Endothelial cell of umbilical vein (primary cell): ENCODE measurements at regions of chr3 and their contacts with region 1.

Region 1: DNA sequence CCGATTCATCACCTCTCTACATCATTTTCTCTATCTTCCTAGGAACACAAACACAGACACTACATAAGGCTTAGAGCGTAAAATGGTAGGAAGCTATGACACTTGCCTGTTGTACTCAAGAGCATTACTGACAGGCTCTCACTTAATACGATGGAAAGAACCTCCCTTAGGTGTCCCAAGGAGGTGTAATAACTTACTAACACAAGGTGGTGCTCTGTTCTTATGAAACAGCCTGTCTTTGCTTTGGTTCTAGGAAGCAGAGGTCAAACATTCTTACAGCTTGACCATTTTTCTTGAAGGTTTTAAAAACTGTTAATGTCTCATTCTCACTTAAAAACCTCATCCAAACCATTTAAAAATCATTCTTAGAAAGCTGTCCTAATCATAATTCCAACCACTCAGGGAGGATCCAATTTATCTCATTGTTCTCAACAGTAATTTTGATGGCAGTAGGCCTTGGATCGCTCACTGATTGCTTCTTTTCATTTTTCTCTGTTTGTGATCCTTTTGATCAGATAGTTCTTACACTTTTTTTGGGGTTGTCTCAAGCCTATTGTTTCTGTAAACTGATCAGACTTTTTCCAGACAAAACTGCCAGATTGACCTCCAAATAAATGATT is 317.8 kb upstream of the AGTR1 start:
- DNase-seq: peak; percentile 58
- H3K4me3 ChIP-seq: no peak overlapping the region
- H3K27ac ChIP-seq: no peak overlapping the region
- H3K4me1 ChIP-seq: no peaks in the 10 kb centered on the region
- H3K27me3 ChIP-seq: no peaks in the 10 kb centered on the region
- CTCF ChIP-seq: peak; percentile 26 to 34
- POLR2A ChIP-seq: no peak

Region 2: DNA sequence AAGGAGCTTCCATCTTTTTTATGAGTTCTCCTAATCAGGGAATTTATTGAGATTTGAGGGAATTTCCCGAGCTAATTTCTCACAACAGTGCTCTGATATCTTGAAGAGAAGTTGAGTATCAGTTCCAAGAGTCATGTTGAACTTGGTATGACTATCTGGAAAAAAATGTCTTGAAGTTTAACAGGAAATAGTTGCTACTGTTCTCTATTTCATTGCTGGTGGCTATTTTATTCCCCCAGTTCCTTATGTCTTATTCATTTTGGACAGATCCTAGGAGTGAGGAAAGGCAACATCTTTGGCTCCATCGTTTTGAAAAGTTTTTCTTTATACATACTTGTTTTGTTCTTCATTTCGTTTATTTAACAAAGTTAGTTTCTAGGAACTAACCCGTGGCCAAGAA is 10.0 kb after region 1 on chr3:
- CTCF ChIA-PET with region 1: interaction called, 18 read pairs
- POLR2A ChIA-PET with region 1: no interaction called
- dilution Hi-C with region 1: no loop called
- intact Hi-C with region 1: no loop called
- DNase-seq: no peak
- H3K4me3 ChIP-seq: no peak overlapping the region
- H3K27ac ChIP-seq: no peak overlapping the region
- H3K4me1 ChIP-seq: no peaks in the 10 kb centered on the region
- H3K27me3 ChIP-seq: no peaks in the 10 kb centered on the region
- CTCF ChIP-seq: no peak
- POLR2A ChIP-seq: no peak

Region 3: GRCh38 chr3:148459931-148460513 is 80.1 kb after region 1 on chr3:
- CTCF ChIA-PET with region 1: interaction called, 16 read pairs
- POLR2A ChIA-PET with region 1: no interaction called
- dilution Hi-C with region 1: no loop called
- intact Hi-C with region 1: loop called (anchors 5 kb)
- DNase-seq: no peak
- H3K4me3 ChIP-seq: no peak overlapping the region
- H3K27ac ChIP-seq: no peak overlapping the region
- H3K4me1 ChIP-seq: peaks cover 10% of the 10 kb centered on the region
- H3K27me3 ChIP-seq: no peaks in the 10 kb centered on the region
- CTCF ChIP-seq: no peak
- POLR2A ChIP-seq: no peak

Region 4: DNA sequence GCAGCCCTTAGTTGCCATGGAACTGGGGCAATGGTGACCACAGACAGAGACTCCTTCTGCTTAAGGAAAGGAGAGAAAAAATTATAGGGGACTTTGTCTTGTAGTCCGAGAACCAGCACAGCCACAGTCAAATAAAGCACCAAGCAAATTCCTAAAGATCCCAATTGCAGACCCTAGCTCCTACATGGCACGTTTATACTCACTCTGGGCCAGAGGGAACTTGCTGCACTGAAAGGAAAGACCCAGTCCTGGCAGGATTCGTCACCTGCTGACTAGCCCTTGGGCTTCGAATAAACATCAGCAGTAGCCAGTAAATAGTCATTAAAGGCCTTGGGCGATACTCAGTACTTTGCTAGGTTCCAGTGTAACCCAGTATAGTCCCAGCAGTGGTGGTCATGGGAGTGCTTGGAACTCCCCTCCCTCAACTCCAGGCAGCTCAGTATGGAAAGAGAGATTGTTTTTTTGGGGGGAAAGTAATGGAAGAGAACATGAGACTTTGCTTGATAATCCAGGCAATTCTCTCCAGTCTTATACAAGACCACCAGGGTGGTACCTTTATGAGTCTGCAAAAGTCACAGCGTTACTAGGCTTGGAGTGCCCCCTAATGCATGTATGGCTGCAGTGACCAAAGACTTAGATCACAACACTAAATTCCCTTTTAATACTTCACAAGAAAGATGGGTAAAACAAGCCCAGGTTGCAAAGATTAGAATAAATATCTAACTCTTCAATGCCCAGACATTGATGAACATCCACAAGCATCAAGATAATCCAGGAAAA is 251.4 kb after region 1 on chr3:
- CTCF ChIA-PET with region 1: interaction called, 45 read pairs
- POLR2A ChIA-PET with region 1: no interaction called
- dilution Hi-C with region 1: no loop called
- intact Hi-C with region 1: loop called (anchors 2 kb)
- DNase-seq: peak; percentile 14
- H3K4me3 ChIP-seq: no peak overlapping the region
- H3K27ac ChIP-seq: no peak overlapping the region
- H3K4me1 ChIP-seq: no peaks in the 10 kb centered on the region
- H3K27me3 ChIP-seq: no peaks in the 10 kb centered on the region
- CTCF ChIP-seq: peak; percentile 15 to 28
- POLR2A ChIP-seq: no peak

Region 5: DNA sequence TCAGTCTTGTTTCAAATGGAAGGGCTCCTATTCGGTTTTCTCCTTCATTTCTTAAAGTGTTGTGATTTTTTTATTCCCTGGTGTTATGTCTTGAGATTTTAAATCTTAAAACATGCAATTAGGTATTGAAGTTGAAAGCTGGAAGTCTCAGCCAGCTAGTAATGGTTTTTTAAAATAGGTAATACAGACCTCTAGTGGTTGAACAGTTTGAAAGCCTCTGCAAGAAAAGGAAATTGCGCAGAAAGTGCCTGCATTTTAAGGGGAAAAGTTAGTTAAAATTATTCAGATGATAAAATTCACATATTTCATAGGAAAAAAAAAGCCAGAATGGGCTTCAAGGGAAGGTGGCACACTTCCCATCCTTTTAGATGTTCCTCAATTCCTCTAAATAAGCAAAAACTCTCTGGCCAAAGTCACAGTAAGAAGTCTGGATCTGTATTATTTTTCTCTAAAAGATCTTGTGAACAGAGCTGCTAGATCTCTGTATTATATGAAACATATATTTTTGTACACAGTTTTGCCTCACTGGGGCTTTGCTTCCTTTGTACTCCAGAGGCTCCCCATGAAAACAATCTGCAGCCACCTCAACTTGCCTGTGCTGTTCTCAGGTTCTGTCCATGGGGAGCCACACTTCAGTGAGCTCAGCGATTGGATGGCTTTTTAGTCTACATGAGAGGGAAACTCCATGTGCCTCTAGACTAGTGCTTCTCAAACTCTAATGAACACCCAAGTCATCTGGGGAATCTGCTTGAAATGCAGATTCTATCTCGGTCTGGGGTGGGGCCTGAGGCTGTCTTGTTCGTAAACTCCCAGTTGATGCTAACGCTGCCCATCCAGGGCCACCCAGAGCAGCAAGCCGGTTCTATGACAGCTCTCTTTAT is 339.3 kb after region 1 on chr3:
- CTCF ChIA-PET with region 1: interaction called, 56 read pairs
- POLR2A ChIA-PET with region 1: no interaction called
- dilution Hi-C with region 1: no loop called
- intact Hi-C with region 1: loop called (anchors 1 kb)
- DNase-seq: no peak
- H3K4me3 ChIP-seq: no peak overlapping the region
- H3K27ac ChIP-seq: no peak overlapping the region
- H3K4me1 ChIP-seq: no peaks in the 10 kb centered on the region
- H3K27me3 ChIP-seq: peaks cover 0 to 4% of the 10 kb centered on the region in 2 experiments
- CTCF ChIP-seq: peak in 1 of 2 donors; percentile 6
- POLR2A ChIP-seq: no peak

Region 6: DNA sequence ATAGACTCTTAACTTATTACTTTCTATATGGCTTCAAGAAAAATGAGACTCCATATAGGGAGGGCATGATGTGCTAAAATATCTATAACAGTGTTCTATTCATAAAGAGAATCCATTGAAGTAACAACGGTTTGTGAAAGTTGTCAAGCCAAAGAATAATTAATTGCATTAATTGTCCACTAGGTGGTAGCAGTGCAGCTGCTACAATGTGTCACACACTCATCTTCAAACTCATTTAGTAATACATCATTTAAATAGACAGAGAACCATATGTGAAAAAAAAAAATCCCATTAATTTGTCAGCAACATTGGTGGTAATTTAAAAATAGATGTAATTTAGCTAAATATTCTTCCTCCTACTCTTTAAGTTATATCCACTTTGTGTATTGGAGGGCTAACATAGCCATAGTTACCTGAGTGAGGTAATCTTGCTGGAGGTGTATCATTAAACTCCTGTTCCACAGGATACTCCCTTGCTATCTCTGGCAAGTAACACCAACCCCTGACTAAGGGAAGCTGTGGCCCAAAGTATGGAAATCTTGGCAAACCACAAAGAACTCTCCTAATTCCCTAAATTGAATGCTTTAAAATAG is 481.5 kb after region 1 on chr3:
- CTCF ChIA-PET with region 1: interaction called, 12 read pairs
- POLR2A ChIA-PET with region 1: no interaction called
- dilution Hi-C with region 1: no loop called
- intact Hi-C with region 1: loop called (anchors 2 kb)
- DNase-seq: peak; percentile 60
- H3K4me3 ChIP-seq: no peak overlapping the region
- H3K27ac ChIP-seq: no peak overlapping the region
- H3K4me1 ChIP-seq: no peaks in the 10 kb centered on the region
- H3K27me3 ChIP-seq: peaks cover 18 to 28% of the 10 kb centered on the region in 2 experiments
- CTCF ChIP-seq: peak; percentile 30 to 46
- POLR2A ChIP-seq: no peak